BJ (cell line): ENCODE measurements at regions of chr10 and their contacts with region 1.

Region 1: DNA sequence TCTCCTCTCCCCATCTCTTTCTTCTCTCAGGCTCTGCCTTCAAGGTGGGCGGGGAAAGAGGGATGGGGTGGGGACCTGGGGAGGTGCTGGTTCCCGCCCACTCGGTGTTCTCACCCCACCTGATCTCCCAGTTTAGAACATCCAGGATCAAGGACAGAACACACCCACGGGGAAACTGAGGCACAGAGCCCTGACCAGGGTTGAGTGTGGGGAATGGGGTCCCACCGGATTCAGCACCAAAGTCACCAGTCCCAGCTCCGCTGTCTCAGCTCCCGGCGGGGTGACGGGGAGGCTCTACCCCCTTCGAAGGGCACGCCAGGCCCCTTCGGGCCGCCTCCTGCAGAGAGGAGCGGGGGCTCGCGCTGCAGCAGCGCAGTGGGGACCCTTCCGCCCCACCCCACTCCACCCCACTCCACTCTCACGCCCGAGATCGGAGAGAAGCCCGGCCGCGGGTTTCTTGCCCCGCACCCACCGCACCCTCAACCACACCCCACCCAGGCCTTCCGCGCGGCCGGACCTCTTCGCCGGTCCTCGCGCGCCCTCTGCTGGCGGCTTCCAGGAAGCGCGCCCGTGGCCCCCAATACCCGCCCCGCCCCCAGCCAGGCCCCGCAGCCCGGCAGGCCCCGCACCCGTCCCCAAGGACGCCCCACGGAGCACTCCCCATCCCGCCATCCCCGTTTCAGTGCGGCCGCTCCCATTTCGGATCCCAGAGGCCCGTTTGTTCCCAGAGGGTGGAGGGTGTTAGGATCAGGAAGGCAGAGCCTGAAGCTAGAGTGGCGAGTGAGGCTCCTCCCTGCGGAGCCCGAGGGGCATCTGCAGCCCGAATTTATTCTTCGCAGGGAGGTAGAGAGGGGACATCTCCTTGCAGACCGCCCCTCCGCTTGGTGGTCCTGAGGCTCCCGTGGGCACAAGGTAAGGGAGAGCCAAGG is 18.0 kb downstream of the POLL start:
- DNase-seq: no peak
- H3K4me3 ChIP-seq: peak overlapping the region; percentile 71
- H3K27me3 ChIP-seq: peaks cover 29% of the 10 kb centered on the region
- CTCF ChIP-seq: peak; percentile 72

Region 2: GRCh38 chr10:101272229-101272868 is 297.8 kb before region 1 on chr10:
- CTCF ChIA-PET with region 1: interaction called, 35 read pairs
- POLR2A ChIA-PET with region 1: no interaction called
- DNase-seq: no peak
- H3K4me3 ChIP-seq: no peak overlapping the region
- H3K27me3 ChIP-seq: peaks cover 7% of the 10 kb centered on the region
- CTCF ChIP-seq: peak; percentile 81

Region 3: DNA sequence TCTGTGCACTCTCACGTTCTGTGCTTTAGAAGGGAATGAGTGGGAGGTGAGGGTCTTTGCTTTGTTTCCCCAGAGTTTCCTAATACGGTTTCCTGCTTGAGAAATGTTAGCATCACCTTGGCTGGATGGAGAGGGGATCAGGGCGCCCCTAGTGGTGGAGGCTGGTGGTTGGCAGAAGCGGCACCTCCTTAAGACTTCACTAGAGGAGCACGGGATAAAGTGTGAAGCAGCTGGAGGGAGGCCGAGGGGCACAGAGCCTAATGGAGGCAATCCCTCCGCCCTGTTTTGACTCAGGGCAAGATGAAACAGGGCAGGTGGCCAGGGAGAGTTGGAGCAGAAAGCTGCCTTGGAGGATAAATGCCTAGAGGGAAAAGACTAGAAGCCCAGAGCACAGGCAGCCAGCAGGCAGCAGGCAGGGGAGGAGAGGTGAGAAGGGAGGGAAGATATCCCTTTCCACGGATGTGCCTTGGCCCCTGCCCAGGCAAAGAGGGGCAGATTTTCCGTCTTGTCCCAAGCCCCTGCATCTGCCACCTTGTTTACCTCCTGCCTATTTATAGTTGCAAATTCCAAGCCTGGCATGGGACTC is 272.1 kb before region 1 on chr10:
- CTCF ChIA-PET with region 1: interaction called, 10 read pairs
- POLR2A ChIA-PET with region 1: no interaction called
- DNase-seq: no peak
- H3K4me3 ChIP-seq: no peak overlapping the region
- H3K27me3 ChIP-seq: peaks cover 28% of the 10 kb centered on the region
- CTCF ChIP-seq: peak; percentile 93

Region 4: DNA sequence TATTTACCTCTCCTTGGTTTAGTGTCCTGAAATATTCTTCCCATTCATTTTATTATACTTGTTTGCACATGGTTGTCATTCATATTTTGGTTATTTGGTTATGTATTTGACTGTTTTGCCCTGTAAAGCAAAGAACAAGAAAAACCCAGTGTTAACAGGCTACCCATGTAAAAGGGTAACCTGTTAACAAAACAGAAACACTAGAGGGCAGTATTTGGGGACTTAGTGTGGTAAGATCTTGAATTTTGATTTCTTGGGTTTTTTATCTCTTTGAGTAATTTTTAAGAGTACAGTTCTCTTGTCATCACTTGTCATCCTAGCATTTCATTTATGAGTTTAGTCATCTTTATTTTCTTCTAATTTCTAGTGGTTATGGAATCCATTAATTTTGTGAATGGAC is 33.3 kb before region 1 on chr10:
- CTCF ChIA-PET with region 1: interaction called, 20 read pairs
- POLR2A ChIA-PET with region 1: no interaction called
- DNase-seq: no peak
- H3K4me3 ChIP-seq: no peak overlapping the region
- H3K27me3 ChIP-seq: no peaks in the 10 kb centered on the region
- CTCF ChIP-seq: peak; percentile 38

Region 5: GRCh38 chr10:101580486-101581399 is 10.6 kb after region 1 on chr10:
- CTCF ChIA-PET with region 1: interaction called, 61 read pairs
- POLR2A ChIA-PET with region 1: no interaction called
- DNase-seq: no peak
- H3K4me3 ChIP-seq: no peak overlapping the region
- H3K27me3 ChIP-seq: no peaks in the 10 kb centered on the region
- CTCF ChIP-seq: no peak

Region 6: DNA sequence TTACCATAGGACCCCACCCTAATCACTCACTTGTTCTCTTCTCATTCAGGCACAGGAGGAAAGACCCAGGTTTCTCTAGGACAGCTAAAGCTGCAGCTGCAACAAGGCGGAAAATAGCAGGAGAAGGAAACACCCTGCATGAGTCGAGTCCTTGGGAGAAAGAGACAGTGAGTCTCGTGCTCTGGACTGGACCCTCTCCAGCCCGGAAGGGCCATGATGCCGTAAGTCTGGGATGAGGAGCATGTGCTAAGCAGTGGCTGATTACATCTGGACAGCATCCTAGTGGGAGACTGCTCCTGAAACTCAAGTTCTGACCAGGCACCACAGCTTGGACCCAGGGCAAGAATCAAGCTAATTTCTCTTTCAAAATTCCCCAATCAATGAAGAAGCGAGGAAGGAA is 85.5 kb after region 1 on chr10:
- CTCF ChIA-PET with region 1: no interaction called
- POLR2A ChIA-PET with region 1: no interaction called
- DNase-seq: peak; percentile 9
- H3K4me3 ChIP-seq: no peak overlapping the region
- H3K27me3 ChIP-seq: no peaks in the 10 kb centered on the region
- CTCF ChIP-seq: no peak